Endothelial cell of umbilical vein (primary cell): ENCODE measurements at regions of chr17 and their contacts with region 1.

Region 1: DNA sequence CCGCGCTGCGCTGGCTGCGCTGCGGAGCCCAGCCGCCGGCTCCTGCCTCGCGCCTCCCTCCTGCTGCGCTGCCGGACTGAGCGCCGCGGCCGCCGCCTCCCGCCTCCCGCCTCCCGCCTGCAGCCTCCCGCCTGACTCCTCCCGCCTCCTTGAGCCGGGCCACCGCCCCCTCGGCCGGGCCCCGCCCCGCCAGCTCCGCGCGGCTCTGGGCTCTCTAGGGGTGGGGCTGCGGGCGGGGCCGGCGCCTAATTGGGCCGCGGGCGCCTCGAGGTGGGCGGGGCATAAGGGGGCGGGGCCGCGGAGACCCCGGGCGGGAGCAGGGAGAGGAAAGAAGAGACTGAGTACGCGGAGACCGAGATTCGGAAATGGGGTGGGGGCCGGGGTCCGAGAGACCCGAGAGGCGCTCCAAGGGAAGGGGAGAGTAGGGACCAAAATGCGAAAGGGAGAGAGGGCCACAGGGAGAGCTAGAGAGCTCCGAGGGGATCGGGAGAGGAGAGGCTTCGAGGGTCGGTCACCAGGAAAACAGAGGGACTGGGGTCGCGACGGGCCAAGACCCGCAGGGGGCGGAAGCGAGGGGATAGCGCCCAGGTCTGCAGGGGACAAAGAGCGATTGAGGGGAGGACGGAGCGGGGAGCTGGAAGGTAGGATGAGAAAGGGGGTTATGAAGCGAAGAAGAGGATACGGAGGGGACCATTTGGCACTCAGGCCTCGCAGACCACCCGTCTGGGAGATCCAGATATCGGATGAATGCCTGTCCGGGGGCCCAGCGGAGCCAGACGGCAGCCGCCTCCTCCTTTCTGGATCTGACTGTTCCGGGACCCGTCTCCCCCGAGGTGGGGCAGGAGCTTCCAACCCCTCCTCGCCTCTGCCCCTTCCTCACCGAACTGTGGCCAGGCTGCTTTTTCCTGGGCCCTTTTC is at the start of gene C1QL1:
- DNase-seq: peak; percentile 89
- H3K4me3 ChIP-seq: peak within 1 kb of the TSS; percentile 2 to 51 (median 25)
- H3K27ac ChIP-seq: no peak within 1 kb of the TSS
- H3K4me1 ChIP-seq: peaks cover 8% of the 10 kb centered on the region
- H3K27me3 ChIP-seq: peaks cover 54 to 57% of the 10 kb centered on the region in 2 experiments
- CTCF ChIP-seq: no peak
- POLR2A ChIP-seq: no peak
- total RNA-seq, gene C1QL1: 0.35 TPM in 2 replicates

Region 2: GRCh38 chr17:44947461-44948314 is 20.8 kb before region 1 on chr17 and contains the start of gene KIF18B:
- CTCF ChIA-PET with region 1: no interaction called
- POLR2A ChIA-PET with region 1: no interaction called
- dilution Hi-C with region 1: no loop called
- intact Hi-C with region 1: loop called (anchors 1 kb)
- DNase-seq: peak; percentile 92
- H3K4me3 ChIP-seq: peak within 1 kb of the TSS; percentile 30 to 90 (median 63)
- H3K27ac ChIP-seq: peak within 1 kb of the TSS; percentile 59
- H3K4me1 ChIP-seq: peaks cover 11% of the 10 kb centered on the region
- H3K27me3 ChIP-seq: no peaks in the 10 kb centered on the region
- CTCF ChIP-seq: no peak
- POLR2A ChIP-seq: peak; percentile 97
- total RNA-seq, gene KIF18B: 48.4 and 50.3 TPM in 2 replicates

Region 3: GRCh38 chr17:45073414-45074070 is 105.1 kb after region 1 on chr17:
- CTCF ChIA-PET with region 1: no interaction called
- POLR2A ChIA-PET with region 1: no interaction called
- dilution Hi-C with region 1: no loop called
- intact Hi-C with region 1: no loop called
- DNase-seq: no peak
- H3K4me3 ChIP-seq: no peak overlapping the region
- H3K27ac ChIP-seq: no peak overlapping the region
- H3K4me1 ChIP-seq: peaks cover 10% of the 10 kb centered on the region
- H3K27me3 ChIP-seq: no peaks in the 10 kb centered on the region
- CTCF ChIP-seq: no peak
- POLR2A ChIP-seq: no peak